ENCODE measurements at regions of chr13 and their contacts with region 1.

Region 1: GRCh38 chr13:23909606-23910005 is 12.3 kb upstream of the C1QTNF9B start:
- DNase-seq: no peak
- H3K4me3 ChIP-seq: no peak overlapping the region
- CTCF ChIP-seq: no peak

Region 2: DNA sequence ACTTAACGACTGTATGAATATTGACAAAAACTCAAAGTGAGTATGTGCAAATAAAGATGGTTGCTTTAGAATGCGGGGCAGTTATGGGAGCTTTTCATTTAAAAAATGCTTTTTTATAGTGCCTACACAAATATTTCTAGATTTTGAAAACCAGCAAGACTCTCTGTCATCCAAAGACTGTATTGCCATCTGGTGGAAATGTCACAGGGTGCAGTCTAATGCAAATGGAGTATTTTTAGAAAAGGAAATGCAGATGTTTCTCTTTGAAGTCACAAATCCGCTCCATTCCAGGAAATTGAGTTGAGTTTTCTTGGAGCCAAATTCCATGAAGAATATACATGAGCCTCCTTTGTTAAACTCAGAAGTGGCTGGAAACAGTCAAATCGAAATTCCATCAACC is 10.1 kb before region 1 on chr13:
- CTCF ChIA-PET with region 1: interaction called, 10 read pairs
- POLR2A ChIA-PET with region 1: no interaction called
- DNase-seq: no peak
- H3K4me3 ChIP-seq: no peak overlapping the region
- CTCF ChIP-seq: peak; percentile 33